H1 (cell line): ENCODE measurements at regions of chr19 and their contacts with region 1.

Region 1: DNA sequence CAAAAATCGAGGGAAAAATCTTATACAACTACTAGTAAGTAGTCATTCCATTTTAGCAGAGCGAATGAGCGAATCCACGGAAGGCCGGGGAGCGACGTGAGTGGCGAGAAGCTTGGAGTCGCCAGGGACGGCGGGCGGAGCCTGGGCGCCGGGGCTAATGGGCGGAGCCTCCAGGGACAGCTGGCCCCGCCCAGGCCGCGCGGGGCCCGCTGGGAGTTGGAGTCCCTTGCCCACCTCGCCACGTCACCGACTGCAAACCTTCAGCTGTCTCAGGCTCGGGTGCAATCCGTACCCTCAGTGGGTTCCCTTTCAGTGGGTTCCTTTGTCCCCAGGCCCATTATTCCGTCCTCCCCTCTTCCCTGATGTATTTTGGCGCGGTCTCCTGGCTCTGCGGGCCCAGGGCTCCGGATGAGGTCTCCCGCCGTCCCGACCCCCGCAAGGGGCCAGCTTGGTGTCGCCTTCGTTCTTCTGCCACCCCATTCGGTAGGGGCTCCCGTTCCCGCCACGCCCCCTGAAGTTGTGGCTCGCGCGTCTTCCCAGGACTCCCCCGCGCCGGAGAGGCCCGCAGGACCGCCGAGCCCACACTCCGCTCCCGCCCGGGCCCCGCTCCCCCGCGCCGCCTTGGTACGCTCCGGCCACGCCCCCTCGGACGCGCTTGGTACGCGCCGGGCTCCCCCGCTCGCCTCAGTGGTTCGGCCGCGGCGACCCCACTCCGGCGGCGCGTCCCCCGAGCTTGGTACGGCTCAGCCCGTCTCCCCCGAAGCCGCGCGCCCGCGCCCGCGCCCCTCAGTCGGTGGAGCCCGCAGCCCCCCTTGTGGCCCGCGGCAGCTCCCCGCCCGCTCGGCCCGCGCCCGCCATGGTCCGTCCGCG is at the start of gene PTOV1:
- DNase-seq: peak; percentile 51 to 96
- H3K4me3 ChIP-seq: peak within 1 kb of the TSS; percentile 64 to 88 (median 80)
- H3K27ac ChIP-seq: peak within 1 kb of the TSS; percentile 87
- H3K4me1 ChIP-seq: peaks cover 3 to 9% (median 6%) of the 10 kb centered on the region in 4 experiments
- H3K27me3 ChIP-seq: no peaks in the 10 kb centered on the region; a peak in 1 of 7 replicates
- CTCF ChIP-seq: no peak
- EP300 ChIP-seq: peak in 1 of 2 experiments; percentile 99; a peak in 2 of 3 replicates
- POLR2A ChIP-seq: peak; percentile 41 to 70
- RAD21 ChIP-seq: no peak
- total RNA-seq, gene PTOV1: 251 and 261 TPM in 2 replicates

Region 2: DNA sequence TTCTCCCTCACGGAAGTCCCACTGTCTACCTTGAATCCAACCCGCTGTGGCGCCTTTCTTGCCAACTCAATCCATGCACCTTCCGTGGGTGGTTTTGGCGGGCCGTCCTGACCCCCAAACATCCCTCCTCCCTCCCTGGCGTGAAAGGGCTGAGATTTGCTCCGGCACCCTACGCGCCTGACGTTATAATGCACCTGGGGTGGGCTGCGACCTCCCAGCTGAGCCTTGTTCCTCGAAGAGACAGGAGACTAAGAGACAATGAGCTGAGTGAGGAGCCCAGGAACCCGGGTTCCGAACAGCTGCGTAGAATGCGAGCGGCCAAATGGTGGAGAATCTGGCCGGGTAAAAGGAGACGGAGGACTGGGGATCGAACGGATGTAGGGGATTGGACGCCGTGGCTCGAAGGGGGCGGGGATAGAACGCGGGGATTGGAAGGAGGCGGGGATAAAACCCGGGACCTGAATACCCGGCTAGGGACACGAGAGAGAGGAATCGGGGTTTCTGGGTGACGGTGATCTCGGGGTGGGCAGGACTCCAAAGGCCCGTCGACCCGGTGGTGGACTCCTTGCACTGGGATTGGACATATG is 160.0 kb before region 1 on chr19 and contains the start of gene CPT1C:
- CTCF ChIA-PET with region 1: interaction called, 4 read pairs
- POLR2A ChIA-PET with region 1: interaction called, 11 read pairs
- DNase-seq: peak; percentile 73 to 94
- H3K4me3 ChIP-seq: peak within 1 kb of the TSS; percentile 88 to 94 (median 92)
- H3K27ac ChIP-seq: peak within 1 kb of the TSS; percentile 57; the same call in 1 of the 2 replicates
- H3K4me1 ChIP-seq: peaks cover 0 to 25% (median 13%) of the 10 kb centered on the region in 4 experiments; a peak in 6 of 7 replicates
- H3K27me3 ChIP-seq: no peaks in the 10 kb centered on the region
- CTCF ChIP-seq: 0 out of 4 replicates have a peak, but pooled peaks of 1 of the 3 experiments have one; percentile 9
- EP300 ChIP-seq: no peak
- POLR2A ChIP-seq: peak; percentile 81; a peak in 2 of 3 replicates
- RAD21 ChIP-seq: no peak
- total RNA-seq, gene CPT1C: 91.8 and 98.3 TPM in 2 replicates

Region 3: DNA sequence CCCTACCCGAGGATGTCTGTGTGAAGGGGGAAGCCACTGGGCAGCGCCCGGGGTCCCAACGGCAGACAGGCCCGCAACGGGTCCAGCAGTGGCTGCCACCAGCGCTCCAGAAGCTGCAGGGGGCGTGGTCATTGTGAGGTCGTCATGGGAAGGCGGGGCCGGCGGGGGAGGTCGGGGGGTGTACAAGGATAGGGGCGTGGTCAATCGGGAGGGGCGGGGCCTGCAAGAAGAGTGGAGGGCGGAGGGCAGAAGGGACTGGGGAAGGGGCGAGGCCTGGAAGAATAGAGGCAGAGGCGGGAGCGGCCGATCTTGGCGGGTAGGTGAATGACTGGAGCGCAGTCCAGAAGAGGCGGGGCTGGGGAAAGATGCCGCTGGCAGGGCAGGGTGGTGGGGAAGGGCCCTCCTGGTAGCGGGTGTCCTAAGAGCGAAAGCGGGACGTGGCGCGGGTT is 42.0 kb before region 1 on chr19:
- CTCF ChIA-PET with region 1: interaction called, 9 read pairs
- POLR2A ChIA-PET with region 1: interaction called, 29 read pairs
- DNase-seq: peak; percentile 94 to 99
- H3K4me3 ChIP-seq: peak overlapping the region; percentile 40 to 61 (median 52)
- H3K27ac ChIP-seq: no peak overlapping the region; the same call in 1 of the 2 replicates
- H3K4me1 ChIP-seq: peaks cover 6 to 17% (median 12%) of the 10 kb centered on the region in 4 experiments
- H3K27me3 ChIP-seq: no peaks in the 10 kb centered on the region
- CTCF ChIP-seq: no peak
- EP300 ChIP-seq: no peak
- POLR2A ChIP-seq: peak; percentile 66 to 80; a peak in 2 of 3 replicates
- RAD21 ChIP-seq: no peak

Region 4: DNA sequence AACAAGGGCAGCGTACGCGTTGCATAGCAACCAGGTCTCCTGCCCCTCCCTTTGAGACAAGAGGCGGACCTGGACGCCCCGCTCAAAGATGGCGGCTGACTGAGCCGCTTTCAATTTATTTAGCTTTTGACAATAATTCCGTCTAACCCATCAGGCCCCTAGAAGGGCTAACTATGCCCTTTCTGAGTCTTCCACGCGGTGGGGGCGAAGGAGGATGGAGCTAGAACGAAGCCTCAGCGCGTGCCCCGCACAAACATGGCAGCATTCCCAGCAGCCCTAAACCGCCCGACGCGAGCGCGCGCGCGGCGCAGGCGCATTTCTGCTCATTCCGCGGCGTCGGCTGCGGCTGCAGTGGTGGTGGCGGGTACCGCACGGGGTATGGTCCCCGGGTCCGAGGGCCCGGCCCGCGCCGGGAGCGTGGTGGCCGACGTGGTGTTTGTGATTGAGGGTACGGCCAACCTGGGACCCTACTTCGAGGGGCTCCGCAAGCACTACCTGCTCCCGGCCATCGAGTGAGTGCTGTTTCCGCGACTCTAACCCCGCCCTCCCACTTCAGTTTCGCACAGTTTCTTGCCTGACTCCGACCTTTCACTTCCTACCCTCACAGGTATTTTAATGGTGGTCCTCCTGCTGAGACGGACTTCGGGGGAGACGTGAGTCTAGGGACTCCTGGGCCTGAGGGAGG is 32.6 kb before region 1 on chr19 and contains the start of gene MED25:
- CTCF ChIA-PET with region 1: interaction called, 9 read pairs
- POLR2A ChIA-PET with region 1: interaction called, 29 read pairs
- DNase-seq: peak in 1 of 2 experiments; percentile 95
- H3K4me3 ChIP-seq: peak within 1 kb of the TSS; percentile 60 to 91 (median 82)
- H3K27ac ChIP-seq: peak within 1 kb of the TSS; percentile 91
- H3K4me1 ChIP-seq: peaks cover 0 to 7% (median 4%) of the 10 kb centered on the region in 4 experiments; a peak in 3 of 7 replicates
- H3K27me3 ChIP-seq: no peaks in the 10 kb centered on the region
- CTCF ChIP-seq: no peak
- EP300 ChIP-seq: no peak
- POLR2A ChIP-seq: peak; percentile 63 to 78
- RAD21 ChIP-seq: no peak
- total RNA-seq, gene MED25: 71.4 and 73.9 TPM in 2 replicates

Region 5: GRCh38 chr19:49862376-49863253 is 11.9 kb after region 1 on chr19:
- CTCF ChIA-PET with region 1: interaction called, 13 read pairs
- POLR2A ChIA-PET with region 1: interaction called, 247 read pairs
- DNase-seq: peak; percentile 62 to 94
- H3K4me3 ChIP-seq: no peak overlapping the region
- H3K27ac ChIP-seq: no peak overlapping the region
- H3K4me1 ChIP-seq: peaks cover 0 to 16% (median 4%) of the 10 kb centered on the region in 4 experiments; a peak in 5 of 7 replicates
- H3K27me3 ChIP-seq: no peaks in the 10 kb centered on the region
- CTCF ChIP-seq: peak; percentile 61 to 73 (median 65)
- EP300 ChIP-seq: no peak
- POLR2A ChIP-seq: no peak
- RAD21 ChIP-seq: peak; percentile 19 to 49; a peak in 3 of 4 replicates

Region 6: DNA sequence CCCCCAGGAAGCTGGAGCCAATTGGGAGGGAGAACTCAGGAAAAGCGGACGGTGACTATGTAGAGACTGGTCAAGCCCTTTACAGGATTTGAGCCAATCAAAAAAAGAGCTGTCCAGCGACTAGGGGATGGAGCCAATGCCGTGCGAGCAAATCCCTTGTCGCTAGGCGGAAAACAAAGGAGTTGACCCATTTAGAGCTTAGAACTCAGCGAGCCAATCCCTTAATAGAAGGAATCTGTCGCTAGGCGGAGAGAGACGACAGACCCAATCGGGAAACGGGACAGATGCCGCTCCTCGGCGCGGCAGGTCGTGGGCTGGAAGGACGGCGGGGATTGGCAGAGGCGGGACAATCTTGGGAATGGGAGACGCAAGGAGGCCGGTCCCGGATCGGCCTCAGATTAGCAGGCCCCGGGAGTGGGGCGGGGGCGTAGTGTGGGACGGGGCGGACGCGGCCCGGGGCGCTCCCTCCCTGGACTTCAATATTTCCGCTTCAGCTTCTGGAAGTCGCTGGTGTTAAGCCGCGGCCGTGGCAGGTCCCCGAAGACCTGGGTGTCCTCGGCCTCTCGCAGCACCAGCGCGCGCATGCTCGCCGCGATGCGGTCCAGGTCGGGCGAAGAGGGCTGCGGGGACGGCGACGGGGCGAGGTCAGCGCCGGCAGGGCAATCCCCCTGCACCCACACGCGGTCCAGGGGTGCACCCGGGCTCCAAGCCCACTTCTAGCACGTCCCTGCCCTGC is 18.9 kb after region 1 on chr19:
- CTCF ChIA-PET with region 1: interaction called, 13 read pairs
- POLR2A ChIA-PET with region 1: interaction called, 247 read pairs
- DNase-seq: peak; percentile 98 to 99
- H3K4me3 ChIP-seq: peak overlapping the region; percentile 45 to 70 (median 56)
- H3K27ac ChIP-seq: peak overlapping the region; percentile 77
- H3K4me1 ChIP-seq: peaks cover 0 to 12% (median 5%) of the 10 kb centered on the region in 4 experiments; a peak in 5 of 7 replicates
- H3K27me3 ChIP-seq: no peaks in the 10 kb centered on the region
- CTCF ChIP-seq: no peak
- EP300 ChIP-seq: no peak
- POLR2A ChIP-seq: peak in 1 of 2 experiments; percentile 87; a peak in 2 of 3 replicates
- RAD21 ChIP-seq: no peak